ENCODE measurements at regions of chr15 and their contacts with region 1.

Region 1: GRCh38 chr15:42581272-42581730 is 5.9 kb downstream of the STARD9 start:
- DNase-seq: peak; percentile 63 to 80 (median 77)
- ATAC-seq: peak; percentile 98
- H3K4me3 ChIP-seq: peak overlapping the region; percentile 33
- H3K4me3 Mint-ChIP-seq: peak overlapping the region; percentile 85 to 96 (median 90)
- H3K27ac ChIP-seq: peak overlapping the region; percentile 71
- H3K27ac Mint-ChIP-seq: peak overlapping the region; percentile 77 to 97 (median 89)
- H3K4me1 ChIP-seq: peaks cover 8 to 11% of the 10 kb centered on the region in 2 donors
- H3K4me1 Mint-ChIP-seq: peaks cover 20 to 51% (median 37%) of the 10 kb centered on the region in 7 donors
- H3K27me3 ChIP-seq: no peaks in the 10 kb centered on the region
- H3K27me3 Mint-ChIP-seq: peaks cover 4 to 32% (median 10%) of the 10 kb centered on the region in 5 donors

Region 2: DNA sequence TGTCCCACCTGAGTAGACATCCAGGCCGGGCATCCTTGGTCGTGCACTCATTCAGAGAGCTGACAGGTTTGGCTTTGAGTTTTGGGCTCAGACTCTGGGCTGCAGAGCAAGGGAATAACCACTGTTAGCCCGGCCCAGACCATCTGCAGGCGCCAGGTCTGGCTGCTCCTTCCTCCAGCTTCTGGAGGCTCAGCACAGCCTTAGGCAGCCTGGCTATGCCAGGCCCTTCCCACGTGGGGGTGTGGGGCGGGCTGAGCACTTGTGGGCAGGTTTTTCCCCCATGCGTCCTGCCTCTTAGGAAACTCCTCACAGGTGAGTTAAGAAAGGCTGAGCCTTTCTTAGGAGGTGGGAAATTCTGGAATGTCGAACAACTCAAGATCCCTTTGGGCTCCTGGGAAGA is 731.4 kb before region 1 on chr15:
- CTCF ChIA-PET with region 1: no interaction called
- POLR2A ChIA-PET with region 1: no interaction called
- intact Hi-C with region 1: no loop called
- DNase-seq: no peak
- ATAC-seq: no peak
- H3K4me3 ChIP-seq: no peak overlapping the region
- H3K4me3 Mint-ChIP-seq: no peak overlapping the region
- H3K27ac ChIP-seq: no peak overlapping the region
- H3K27ac Mint-ChIP-seq: peak overlapping the region in 2 of 9 donors; percentile 32 to 71
- H3K4me1 ChIP-seq: no peaks in the 10 kb centered on the region
- H3K4me1 Mint-ChIP-seq: no peaks in the 10 kb centered on the region
- H3K27me3 ChIP-seq: no peaks in the 10 kb centered on the region
- H3K27me3 Mint-ChIP-seq: no peaks in the 10 kb centered on the region

Region 3: DNA sequence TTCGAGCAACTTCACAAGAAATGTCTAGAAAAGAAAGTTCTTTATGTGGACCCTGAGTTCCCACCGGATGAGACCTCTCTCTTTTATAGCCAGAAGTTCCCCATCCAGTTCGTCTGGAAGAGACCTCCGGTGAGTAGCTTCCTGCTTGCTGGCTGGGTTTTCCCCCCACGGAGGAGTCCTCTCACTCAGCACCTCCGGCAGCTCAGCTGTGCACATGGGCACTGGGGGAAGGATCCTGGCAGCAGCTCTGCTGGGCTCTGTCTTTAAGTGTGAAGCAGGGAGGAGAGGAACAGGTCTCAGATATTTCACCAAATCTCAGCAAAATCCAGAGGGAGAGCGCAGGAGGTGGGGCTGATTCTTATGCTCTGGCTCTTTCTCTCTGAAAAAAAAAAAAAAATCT is 221.3 kb before region 1 on chr15:
- CTCF ChIA-PET with region 1: no interaction called
- POLR2A ChIA-PET with region 1: no interaction called
- intact Hi-C with region 1: no loop called
- DNase-seq: no peak
- ATAC-seq: no peak
- H3K4me3 ChIP-seq: no peak overlapping the region
- H3K4me3 Mint-ChIP-seq: no peak overlapping the region
- H3K27ac ChIP-seq: no peak overlapping the region
- H3K27ac Mint-ChIP-seq: no peak overlapping the region
- H3K4me1 ChIP-seq: no peaks in the 10 kb centered on the region
- H3K4me1 Mint-ChIP-seq: peaks cover 0 to 1% (median 0%) of the 10 kb centered on the region in 7 donors
- H3K27me3 ChIP-seq: no peaks in the 10 kb centered on the region
- H3K27me3 Mint-ChIP-seq: no peaks in the 10 kb centered on the region

Region 4: DNA sequence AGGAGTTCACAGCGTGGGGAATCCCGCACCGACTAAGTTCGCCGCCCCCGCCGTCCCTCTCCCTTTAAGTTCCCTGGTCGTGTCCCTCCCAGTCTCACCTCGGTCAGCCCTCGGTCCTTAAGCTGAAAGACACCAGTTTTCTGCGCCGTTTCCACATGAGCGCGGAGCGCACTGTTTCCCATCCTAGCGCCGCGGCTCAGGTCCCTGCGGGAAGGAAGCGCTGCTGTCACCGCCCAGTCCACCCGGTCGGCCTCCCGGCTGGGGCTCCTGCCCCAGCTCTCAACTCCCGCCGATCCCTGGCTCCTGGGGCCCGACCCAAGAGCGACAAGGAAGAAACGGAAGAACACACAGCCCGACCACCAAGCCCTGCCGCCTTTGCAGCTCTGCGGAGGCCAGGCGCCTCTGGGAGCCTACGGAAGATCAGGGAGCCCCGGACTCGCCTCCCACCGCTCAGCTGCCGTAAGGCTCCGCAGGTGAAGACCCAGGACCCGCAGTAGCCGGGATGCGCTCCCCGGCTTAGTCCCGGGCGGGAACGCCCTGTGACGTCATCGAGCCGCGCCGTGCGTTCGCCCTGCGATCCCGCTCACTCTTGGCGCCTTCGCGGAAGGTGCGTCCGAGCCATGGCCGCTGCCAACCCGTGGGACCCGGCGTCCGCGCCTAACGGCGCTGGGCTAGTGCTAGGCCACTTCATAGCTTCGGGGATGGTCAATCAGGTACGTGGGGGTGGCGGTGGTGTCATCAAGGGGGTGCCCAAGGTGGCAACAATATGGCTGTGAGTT is 32.9 kb before region 1 on chr15 and contains the starts of genes HAUS2 and LRRC57:
- CTCF ChIA-PET with region 1: interaction called, 3 read pairs
- POLR2A ChIA-PET with region 1: interaction called, 12 read pairs
- intact Hi-C with region 1: loop called in 1 of 2 experiments (anchors 1 kb)
- DNase-seq: peak; percentile 79 to 93 (median 86)
- ATAC-seq: peak; percentile 89
- H3K4me3 ChIP-seq: peak within 1 kb of the TSS; percentile 86
- H3K4me3 Mint-ChIP-seq: peak within 1 kb of the TSS; percentile 93 to 99 (median 96)
- H3K27ac ChIP-seq: peak within 1 kb of the TSS; percentile 93
- H3K27ac Mint-ChIP-seq: peak within 1 kb of the TSS; percentile 95 to 99 (median 97)
- H3K4me1 ChIP-seq: peaks cover 21 to 23% of the 10 kb centered on the region in 2 donors
- H3K4me1 Mint-ChIP-seq: peaks cover 29 to 62% (median 51%) of the 10 kb centered on the region in 7 donors
- H3K27me3 ChIP-seq: no peaks in the 10 kb centered on the region
- H3K27me3 Mint-ChIP-seq: no peaks in the 10 kb centered on the region
- total RNA-seq, gene HAUS2: 12.0 to 35.4 (median 16.8) TPM
- total RNA-seq, gene LRRC57: 15.4 to 37.1 (median 18.0) TPM

Measured in naive thymus-derived CD4-positive, alpha-beta T cell (primary cell).